Activated CD8-positive, alpha-beta T cell treated with anti-CD3 and anti-CD28 coated beads for 36 hours (primary cell): ENCODE measurements at regions of chr17 and their contacts with region 1.

Region 1: DNA sequence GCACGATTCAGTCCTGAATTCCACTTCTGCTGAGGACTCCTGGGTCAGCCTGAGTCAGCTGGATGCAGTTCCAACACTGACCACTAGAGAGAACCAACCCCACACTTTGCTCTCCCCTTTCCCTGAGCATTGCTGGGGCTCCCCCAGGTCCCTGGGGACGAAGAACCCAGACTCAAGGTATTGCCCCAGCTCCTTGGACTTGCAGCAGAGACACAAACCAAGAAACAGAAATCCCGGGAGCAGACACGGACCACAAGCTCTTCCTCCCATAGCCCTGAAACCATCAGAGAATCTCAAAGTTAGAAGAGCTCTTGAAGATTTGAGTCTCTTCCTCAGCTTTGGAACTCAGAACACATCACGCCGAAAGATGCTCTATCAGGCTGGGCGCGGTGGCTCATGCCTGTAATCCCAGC is 678 bp upstream of the GH1 start:
- DNase-seq: peak; percentile 80
- ATAC-seq: peak; percentile 99
- H3K4me3 Mint-ChIP-seq: no peak overlapping the region
- H3K27ac Mint-ChIP-seq: no peak overlapping the region
- H3K4me1 Mint-ChIP-seq: peaks cover 5% of the 10 kb centered on the region
- H3K27me3 Mint-ChIP-seq: no peaks in the 10 kb centered on the region
- CTCF ChIP-seq: peak; percentile 95

Region 2: DNA sequence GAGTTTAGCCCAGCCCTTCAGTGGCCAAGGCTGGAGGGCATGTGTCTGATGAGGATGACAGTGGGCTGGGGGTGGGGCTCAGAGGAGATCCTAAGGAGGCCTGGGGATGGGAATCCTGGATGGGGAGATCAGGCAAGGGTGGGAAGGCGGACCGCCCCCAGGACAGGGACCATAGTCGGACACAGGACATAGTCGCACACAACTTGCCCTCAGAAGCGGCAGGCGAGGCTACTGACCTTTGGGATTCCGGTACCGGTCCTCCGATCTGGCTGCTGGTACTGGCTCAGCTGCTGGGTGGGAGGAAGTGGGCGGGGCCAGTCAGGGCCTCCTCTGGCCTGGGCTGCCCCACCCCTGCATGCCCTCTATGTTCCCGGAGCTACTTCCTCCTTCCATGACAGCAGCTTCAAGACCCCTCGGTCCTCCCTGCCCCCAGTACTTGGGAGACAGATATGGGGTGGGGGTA is 11.8 kb after region 1 on chr17:
- CTCF ChIA-PET with region 1: interaction called, 23 read pairs
- POLR2A ChIA-PET with region 1: interaction called, 3 read pairs
- intact Hi-C with region 1: no loop called
- DNase-seq: peak; percentile 80
- ATAC-seq: peak; percentile 71
- H3K4me3 Mint-ChIP-seq: peak overlapping the region; percentile 96
- H3K27ac Mint-ChIP-seq: peak overlapping the region; percentile 91
- H3K4me1 Mint-ChIP-seq: peaks cover 15% of the 10 kb centered on the region
- H3K27me3 Mint-ChIP-seq: no peaks in the 10 kb centered on the region
- CTCF ChIP-seq: no peak

Region 3: DNA sequence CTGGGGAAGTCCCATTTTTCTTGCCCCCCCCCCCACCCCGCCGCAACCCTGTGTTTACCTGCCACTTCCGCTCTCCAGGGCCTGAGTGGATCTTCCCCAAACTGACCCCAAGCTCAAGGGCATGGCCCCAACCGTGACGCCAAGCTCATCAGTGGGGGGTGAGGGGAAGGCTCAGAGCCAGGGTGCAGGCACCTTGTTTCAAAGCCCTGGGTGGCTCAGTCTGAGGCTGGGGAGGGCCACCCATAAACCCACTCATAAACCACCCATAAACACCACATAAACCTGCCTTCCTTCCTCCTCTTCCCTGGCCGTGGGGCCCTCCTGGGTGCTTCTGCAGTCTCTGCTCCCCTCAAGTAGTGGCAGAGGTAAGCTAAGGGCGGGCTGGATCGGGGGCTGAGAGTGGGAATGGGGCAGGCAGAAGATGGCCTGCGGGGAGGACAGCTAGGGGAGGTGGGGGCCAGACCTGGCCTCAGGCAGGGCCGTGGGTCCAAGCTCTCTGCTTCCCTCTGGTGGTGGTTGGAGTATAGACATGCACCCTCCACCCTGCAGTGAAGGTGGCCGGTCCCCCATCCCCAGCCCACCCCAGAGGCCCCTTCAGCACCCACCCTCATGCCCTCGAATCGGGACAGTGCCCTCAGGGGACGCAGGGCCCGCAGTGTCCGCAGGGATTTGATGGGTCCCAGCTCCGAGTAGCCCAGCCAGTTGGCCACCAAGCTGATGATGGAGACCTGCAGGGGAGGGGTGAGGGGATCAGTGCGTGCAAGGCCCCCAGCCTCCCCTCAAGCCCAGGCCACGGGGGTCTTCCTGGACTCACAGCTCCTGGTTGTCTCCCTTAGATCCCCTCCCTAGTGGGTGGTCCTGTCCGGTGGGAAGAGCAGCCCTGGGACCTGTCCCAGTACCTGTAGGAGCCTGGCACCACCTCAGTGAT is 27.4 kb after region 1 on chr17:
- CTCF ChIA-PET with region 1: interaction called, 95 read pairs
- POLR2A ChIA-PET with region 1: interaction called, 3 read pairs
- intact Hi-C with region 1: loop called (anchors 2 kb)
- DNase-seq: peak; percentile 74
- ATAC-seq: peak; percentile 92
- H3K4me3 Mint-ChIP-seq: peak overlapping the region; percentile 50
- H3K27ac Mint-ChIP-seq: peak overlapping the region; percentile 77
- H3K4me1 Mint-ChIP-seq: peaks cover 20% of the 10 kb centered on the region
- H3K27me3 Mint-ChIP-seq: no peaks in the 10 kb centered on the region
- CTCF ChIP-seq: peak; percentile 89

Region 4: GRCh38 chr17:63984651-63985386 is 65.5 kb after region 1 on chr17:
- CTCF ChIA-PET with region 1: interaction called, 126 read pairs
- POLR2A ChIA-PET with region 1: interaction called, 4 read pairs
- intact Hi-C with region 1: loop called (anchors 5 kb)
- DNase-seq: peak; percentile 92
- ATAC-seq: peak; percentile 97
- H3K4me3 Mint-ChIP-seq: no peak overlapping the region
- H3K27ac Mint-ChIP-seq: peak overlapping the region; percentile 87
- H3K4me1 Mint-ChIP-seq: peaks cover 27% of the 10 kb centered on the region
- H3K27me3 Mint-ChIP-seq: no peaks in the 10 kb centered on the region
- CTCF ChIP-seq: no peak

Region 5: GRCh38 chr17:64020056-64020766 is 100.9 kb after region 1 on chr17 and contains the start of gene ICAM2:
- CTCF ChIA-PET with region 1: interaction called, 58 read pairs
- POLR2A ChIA-PET with region 1: interaction called, 6 read pairs
- intact Hi-C with region 1: loop called (anchors 5 kb)
- DNase-seq: peak; percentile 96
- ATAC-seq: peak; percentile 72
- H3K4me3 Mint-ChIP-seq: peak within 1 kb of the TSS; percentile 94
- H3K27ac Mint-ChIP-seq: peak within 1 kb of the TSS; percentile 98
- H3K4me1 Mint-ChIP-seq: peaks cover 66% of the 10 kb centered on the region
- H3K27me3 Mint-ChIP-seq: no peaks in the 10 kb centered on the region
- CTCF ChIP-seq: no peak
- total RNA-seq, gene ICAM2: 53.3 to 53.7 TPM